Psoas muscle (tissue), 8 donors: ENCODE measurements at regions of chr3 and their contacts with region 1.

Region 1: GRCh38 chr3:89340408-89340807 is 233.0 kb downstream of the EPHA3 start:
- DNase-seq: no peak
- ATAC-seq: no peak
- H3K4me3 ChIP-seq: no peak overlapping the region
- H3K27ac ChIP-seq: no peak overlapping the region
- H3K4me1 ChIP-seq: no peaks in the 10 kb centered on the region
- H3K27me3 ChIP-seq: no peaks in the 10 kb centered on the region
- CTCF ChIP-seq: no peak

Region 2: GRCh38 chr3:88807491-88808100 is 532.8 kb before region 1 on chr3:
- intact Hi-C with region 1: no loop called
- DNase-seq: no peak
- ATAC-seq: no peak
- H3K4me3 ChIP-seq: no peak overlapping the region
- H3K27ac ChIP-seq: no peak overlapping the region
- H3K4me1 ChIP-seq: no peaks in the 10 kb centered on the region
- H3K27me3 ChIP-seq: no peaks in the 10 kb centered on the region
- CTCF ChIP-seq: no peak

Region 3: DNA sequence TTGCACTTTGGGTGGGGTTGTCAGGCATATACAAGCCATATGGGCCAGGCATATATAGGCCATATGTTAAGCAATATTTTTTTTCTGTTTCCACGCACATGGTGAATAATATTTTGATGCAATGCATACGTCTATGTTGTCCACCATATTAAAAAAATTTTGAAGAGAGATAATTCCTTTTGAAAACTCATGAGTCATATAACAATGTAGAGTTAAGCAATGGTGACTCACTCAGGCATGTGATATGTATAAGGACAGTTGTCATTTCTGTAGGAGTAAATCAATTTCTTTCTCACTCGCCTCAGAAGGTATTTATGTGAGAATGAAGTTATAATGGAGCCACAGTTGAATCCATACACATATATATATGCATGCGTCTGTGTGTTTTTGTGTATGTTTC is 39.6 kb after region 1 on chr3:
- intact Hi-C with region 1: loop called in 1 of 2 experiments (anchors 5 kb)
- DNase-seq: no peak
- ATAC-seq: no peak
- H3K4me3 ChIP-seq: no peak overlapping the region
- H3K27ac ChIP-seq: no peak overlapping the region
- H3K4me1 ChIP-seq: no peaks in the 10 kb centered on the region
- H3K27me3 ChIP-seq: no peaks in the 10 kb centered on the region
- CTCF ChIP-seq: no peak

Region 4: GRCh38 chr3:89628856-89629665 is 288.7 kb after region 1 on chr3:
- intact Hi-C with region 1: no loop called
- DNase-seq: no peak
- ATAC-seq: no peak
- H3K4me3 ChIP-seq: no peak overlapping the region
- H3K27ac ChIP-seq: no peak overlapping the region
- H3K4me1 ChIP-seq: no peaks in the 10 kb centered on the region
- H3K27me3 ChIP-seq: peaks cover 0 to 2% (median 0%) of the 10 kb centered on the region in 3 donors
- CTCF ChIP-seq: no peak